ENCODE measurements at regions of chr6 and their contacts with region 1.

Region 1: GRCh38 chr6:43174263-43175112 is 3.4 kb downstream of the SRF start:
- DNase-seq: peak; percentile 99
- H3K4me3 Mint-ChIP-seq: peak overlapping the region; percentile 99
- H3K27ac Mint-ChIP-seq: peak overlapping the region; percentile 89
- H3K4me1 Mint-ChIP-seq: peaks cover 43% of the 10 kb centered on the region
- H3K27me3 Mint-ChIP-seq: no peaks in the 10 kb centered on the region

Region 2: GRCh38 chr6:42771741-42772100 is 402.8 kb before region 1 on chr6:
- CTCF ChIA-PET with region 1: no interaction called
- POLR2A ChIA-PET with region 1: no interaction called
- intact Hi-C with region 1: loop called (anchors 1 kb)
- DNase-seq: no peak
- H3K4me3 Mint-ChIP-seq: peak overlapping the region; percentile 74
- H3K27ac Mint-ChIP-seq: peak overlapping the region; percentile 98
- H3K4me1 Mint-ChIP-seq: peaks cover 56% of the 10 kb centered on the region
- H3K27me3 Mint-ChIP-seq: no peaks in the 10 kb centered on the region

Region 3: GRCh38 chr6:43013843-43014433 is 160.6 kb before region 1 on chr6 and contains the starts of genes KLHDC3 and MEA1:
- CTCF ChIA-PET with region 1: no interaction called
- POLR2A ChIA-PET with region 1: no interaction called
- intact Hi-C with region 1: loop called (anchors 1 kb)
- DNase-seq: peak; percentile 100
- H3K4me3 Mint-ChIP-seq: peak within 1 kb of the TSS; percentile 94
- H3K27ac Mint-ChIP-seq: peak within 1 kb of the TSS; percentile 87
- H3K4me1 Mint-ChIP-seq: peaks cover 55% of the 10 kb centered on the region
- H3K27me3 Mint-ChIP-seq: no peaks in the 10 kb centered on the region
- total RNA-seq, gene KLHDC3: 48.1 to 52.3 TPM
- total RNA-seq, gene MEA1: 90.2 to 94.4 TPM

Region 4: GRCh38 chr6:43228951-43229802 is 54.7 kb after region 1 on chr6 and contains the start of gene DNPH1:
- CTCF ChIA-PET with region 1: interaction called, 14 read pairs
- POLR2A ChIA-PET with region 1: interaction called, 11 read pairs
- intact Hi-C with region 1: loop called (anchors 1 kb)
- DNase-seq: peak; percentile 86
- H3K4me3 Mint-ChIP-seq: peak within 1 kb of the TSS; percentile 89
- H3K27ac Mint-ChIP-seq: peak within 1 kb of the TSS; percentile 82
- H3K4me1 Mint-ChIP-seq: peaks cover 42% of the 10 kb centered on the region
- H3K27me3 Mint-ChIP-seq: no peaks in the 10 kb centered on the region
- total RNA-seq, gene DNPH1: 57.5 to 57.9 TPM

Region 5: DNA sequence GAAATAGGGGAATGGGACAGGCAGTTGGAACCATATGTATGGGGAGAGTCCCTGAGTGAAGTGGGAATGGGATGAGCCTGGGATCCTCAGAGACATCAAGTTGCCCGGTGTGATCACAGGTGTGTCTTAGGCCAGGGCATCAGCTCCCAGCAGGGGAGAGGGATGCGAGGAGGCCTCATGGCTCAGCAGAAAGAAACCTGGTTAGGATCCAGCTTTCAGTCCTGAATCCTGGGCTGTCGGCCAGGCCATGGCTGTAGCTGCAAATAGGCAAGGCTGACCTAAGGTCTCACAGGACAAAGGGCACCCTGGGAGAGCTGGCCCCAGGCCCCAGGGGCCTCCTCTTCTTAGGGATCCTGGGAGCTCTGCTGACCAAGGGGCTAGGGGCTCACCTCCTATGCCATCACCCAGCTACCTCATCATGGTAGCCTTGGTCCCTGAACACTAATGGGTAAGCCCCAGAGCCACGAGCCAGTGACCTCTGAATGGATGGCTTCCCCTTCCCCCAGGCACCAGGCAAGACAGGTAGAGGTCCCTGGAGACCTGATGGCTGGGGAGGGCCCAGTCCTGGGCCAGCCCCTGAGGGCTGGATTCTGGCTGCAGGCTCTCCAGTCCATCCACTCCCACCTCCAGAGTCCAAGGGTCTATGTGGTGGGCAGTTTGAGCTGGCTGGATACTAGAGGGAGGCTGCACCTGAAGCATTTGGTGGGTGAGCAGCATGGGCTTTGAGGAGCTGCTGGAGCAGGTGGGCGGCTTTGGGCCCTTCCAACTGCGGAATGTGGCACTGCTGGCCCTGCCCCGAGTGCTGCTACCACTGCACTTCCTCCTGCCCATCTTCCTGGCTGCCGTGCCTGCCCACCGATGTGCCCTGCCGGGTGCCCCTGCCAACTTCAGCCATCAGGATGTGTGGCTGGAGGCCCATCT is 123.4 kb after region 1 on chr6 and contains the start of gene SLC22A7:
- CTCF ChIA-PET with region 1: no interaction called
- POLR2A ChIA-PET with region 1: no interaction called
- intact Hi-C with region 1: no loop called
- DNase-seq: no peak
- H3K4me3 Mint-ChIP-seq: no peak within 1 kb of the TSS
- H3K27ac Mint-ChIP-seq: no peak within 1 kb of the TSS
- H3K4me1 Mint-ChIP-seq: no peaks in the 10 kb centered on the region
- H3K27me3 Mint-ChIP-seq: peaks cover 2% of the 10 kb centered on the region
- total RNA-seq, gene SLC22A7: not detected

Region 6: GRCh38 chr6:43427406-43428111 is 253.1 kb after region 1 on chr6 and contains the start of gene ABCC10:
- CTCF ChIA-PET with region 1: no interaction called
- POLR2A ChIA-PET with region 1: no interaction called
- intact Hi-C with region 1: loop called (anchors 2 kb)
- DNase-seq: peak; percentile 97
- H3K4me3 Mint-ChIP-seq: peak within 1 kb of the TSS; percentile 95
- H3K27ac Mint-ChIP-seq: peak within 1 kb of the TSS; percentile 96
- H3K4me1 Mint-ChIP-seq: peaks cover 17% of the 10 kb centered on the region
- H3K27me3 Mint-ChIP-seq: no peaks in the 10 kb centered on the region
- total RNA-seq, gene ABCC10: 27.2 to 31.9 TPM

Region 7: DNA sequence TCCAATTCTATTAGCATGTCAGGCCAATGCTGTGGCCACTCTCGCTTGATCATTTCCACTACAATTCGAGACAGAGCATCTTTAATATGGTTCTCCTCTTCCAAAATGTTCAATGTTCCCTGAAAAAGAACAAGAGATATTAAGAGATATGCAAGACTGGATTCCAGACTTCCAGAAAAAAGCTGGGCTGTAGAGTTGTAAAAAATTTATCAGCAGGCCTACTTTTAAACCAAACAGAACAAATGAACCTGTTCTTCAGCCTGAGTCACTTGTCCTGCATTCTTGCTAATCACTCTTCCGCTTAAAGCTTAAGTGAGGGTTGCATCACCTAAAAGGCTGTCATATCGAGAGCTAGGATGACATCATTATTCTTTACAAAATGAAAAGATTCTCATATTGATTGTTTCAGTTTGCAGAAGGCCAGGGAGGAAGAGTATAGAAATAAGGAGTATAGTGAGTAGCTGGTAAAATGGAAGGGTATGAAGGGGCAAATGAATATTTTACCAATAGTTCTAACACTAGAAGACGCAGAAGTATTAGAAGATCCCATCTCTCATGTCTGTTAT is 396.5 kb after region 1 on chr6:
- CTCF ChIA-PET with region 1: no interaction called
- POLR2A ChIA-PET with region 1: no interaction called
- intact Hi-C with region 1: loop called (anchors 5 kb)
- DNase-seq: no peak
- H3K4me3 Mint-ChIP-seq: no peak overlapping the region
- H3K27ac Mint-ChIP-seq: peak overlapping the region; percentile 90
- H3K4me1 Mint-ChIP-seq: peaks cover 35% of the 10 kb centered on the region
- H3K27me3 Mint-ChIP-seq: no peaks in the 10 kb centered on the region